A673 (cell line): ENCODE measurements at regions of chr18 and their contacts with region 1.

Region 1: DNA sequence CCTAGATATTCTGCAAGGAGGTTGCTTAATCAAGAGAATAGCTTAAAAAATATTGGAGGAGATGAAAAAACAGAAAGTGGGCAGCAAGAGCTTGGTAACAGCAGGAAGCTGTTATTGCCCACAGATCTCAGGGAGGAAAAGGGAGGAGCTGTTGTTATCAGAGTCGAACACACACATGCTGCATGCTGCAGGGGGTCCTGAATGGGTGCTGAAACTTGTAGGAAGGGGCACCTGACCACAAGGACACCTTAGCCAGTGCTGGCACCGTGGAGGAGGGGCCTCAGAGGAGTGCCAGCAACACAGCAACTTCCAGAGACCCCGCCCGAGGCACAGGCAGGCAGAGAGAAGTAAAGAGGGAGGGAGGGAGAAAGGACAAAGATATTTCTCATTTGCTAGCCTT is 332.9 kb downstream of the SOCS6 start:
- DNase-seq: no peak
- H3K4me3 ChIP-seq: no peak overlapping the region
- H3K27ac ChIP-seq: no peak overlapping the region
- H3K4me1 ChIP-seq: peaks cover 12% of the 10 kb centered on the region
- H3K27me3 ChIP-seq: no peaks in the 10 kb centered on the region
- CTCF ChIP-seq: no peak

Region 2: GRCh38 chr18:69349912-69350597 is 1271.7 kb before region 1 on chr18:
- CTCF ChIA-PET with region 1: no interaction called
- POLR2A ChIA-PET with region 1: no interaction called
- intact Hi-C with region 1: no loop called
- DNase-seq: no peak
- H3K4me3 ChIP-seq: no peak overlapping the region
- H3K27ac ChIP-seq: no peak overlapping the region
- H3K4me1 ChIP-seq: no peaks in the 10 kb centered on the region
- H3K27me3 ChIP-seq: no peaks in the 10 kb centered on the region
- CTCF ChIP-seq: no peak

Region 3: GRCh38 chr18:70600225-70600925 is 21.3 kb before region 1 on chr18:
- CTCF ChIA-PET with region 1: interaction called, 10 read pairs
- POLR2A ChIA-PET with region 1: no interaction called
- intact Hi-C with region 1: no loop called
- DNase-seq: peak; percentile 16
- H3K4me3 ChIP-seq: peak overlapping the region; percentile 13
- H3K27ac ChIP-seq: peak overlapping the region; percentile 35
- H3K4me1 ChIP-seq: peaks cover 16% of the 10 kb centered on the region
- H3K27me3 ChIP-seq: no peaks in the 10 kb centered on the region
- CTCF ChIP-seq: no peak

Region 4: DNA sequence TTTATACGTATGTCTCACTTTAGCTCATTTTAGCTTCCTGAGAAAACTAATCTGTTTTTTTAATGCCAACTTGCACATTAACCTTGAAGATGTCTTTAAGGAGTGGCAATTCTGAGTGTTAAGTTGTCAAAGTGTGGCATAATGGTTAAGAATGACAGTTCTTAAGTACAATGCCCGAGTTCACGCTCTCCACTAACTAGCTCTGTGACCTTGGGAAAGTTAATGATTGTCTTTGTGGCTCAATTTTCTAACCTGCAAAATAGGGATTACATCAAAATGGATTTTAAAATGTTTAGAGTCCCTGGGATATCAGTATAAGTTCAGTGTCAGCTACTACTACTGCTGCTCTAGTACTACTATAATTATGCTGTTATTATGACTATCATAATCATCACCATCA is 76.9 kb after region 1 on chr18:
- CTCF ChIA-PET with region 1: no interaction called
- POLR2A ChIA-PET with region 1: no interaction called
- intact Hi-C with region 1: no loop called
- DNase-seq: no peak
- H3K4me3 ChIP-seq: no peak overlapping the region
- H3K27ac ChIP-seq: peak overlapping the region; percentile 22
- H3K4me1 ChIP-seq: peaks cover 32% of the 10 kb centered on the region
- H3K27me3 ChIP-seq: no peaks in the 10 kb centered on the region
- CTCF ChIP-seq: no peak

Region 5: GRCh38 chr18:70808481-70809056 is 186.9 kb after region 1 on chr18:
- CTCF ChIA-PET with region 1: no interaction called
- POLR2A ChIA-PET with region 1: no interaction called
- intact Hi-C with region 1: no loop called
- DNase-seq: no peak
- H3K4me3 ChIP-seq: no peak overlapping the region
- H3K27ac ChIP-seq: no peak overlapping the region
- H3K4me1 ChIP-seq: no peaks in the 10 kb centered on the region
- H3K27me3 ChIP-seq: no peaks in the 10 kb centered on the region
- CTCF ChIP-seq: no peak

Region 6: GRCh38 chr18:71011389-71011788 is 389.7 kb after region 1 on chr18:
- CTCF ChIA-PET with region 1: no interaction called
- POLR2A ChIA-PET with region 1: no interaction called
- intact Hi-C with region 1: no loop called
- DNase-seq: no peak
- H3K4me3 ChIP-seq: no peak overlapping the region
- H3K27ac ChIP-seq: no peak overlapping the region
- H3K4me1 ChIP-seq: no peaks in the 10 kb centered on the region
- H3K27me3 ChIP-seq: no peaks in the 10 kb centered on the region
- CTCF ChIP-seq: no peak